ENCODE measurements at regions of chr3 and their contacts with region 1.

Region 1: DNA sequence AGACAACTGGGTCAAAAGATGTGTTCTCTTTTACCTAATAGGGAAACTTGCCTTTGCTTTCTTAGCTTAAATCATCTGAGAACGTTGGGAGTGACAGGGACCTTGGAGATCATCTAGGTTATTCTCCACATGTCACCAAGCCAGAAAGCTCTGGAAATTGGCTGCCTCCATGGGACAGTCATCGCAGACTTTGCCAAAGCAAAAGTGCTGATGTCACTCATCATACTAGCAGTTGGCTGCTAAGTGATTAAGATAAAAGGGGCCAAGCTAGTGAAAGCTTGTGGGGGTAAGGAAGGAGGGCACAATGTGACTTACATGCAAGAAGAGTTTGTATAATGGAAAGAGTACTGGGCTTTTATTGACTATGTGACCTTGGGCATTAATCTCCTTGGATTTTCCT is 198.0 kb upstream of the PFN2 start:
- DNase-seq: peak; percentile 56 to 67
- ATAC-seq: peak; percentile 94 to 97 (median 96)
- H3K4me3 ChIP-seq: no peak overlapping the region
- H3K27ac ChIP-seq: peak overlapping the region; percentile 76
- H3K4me1 ChIP-seq: peaks cover 27% of the 10 kb centered on the region
- H3K27me3 ChIP-seq: no peaks in the 10 kb centered on the region
- CTCF ChIP-seq: no peak

Region 2: GRCh38 chr3:150062492-150062891 is 106.2 kb before region 1 on chr3:
- intact Hi-C with region 1: no loop called
- DNase-seq: no peak
- ATAC-seq: peak; percentile 41 to 66 (median 45)
- H3K4me3 ChIP-seq: peak overlapping the region; percentile 31
- H3K27ac ChIP-seq: peak overlapping the region; percentile 95
- H3K4me1 ChIP-seq: peaks cover 61% of the 10 kb centered on the region
- H3K27me3 ChIP-seq: no peaks in the 10 kb centered on the region
- CTCF ChIP-seq: no peak

Region 3: DNA sequence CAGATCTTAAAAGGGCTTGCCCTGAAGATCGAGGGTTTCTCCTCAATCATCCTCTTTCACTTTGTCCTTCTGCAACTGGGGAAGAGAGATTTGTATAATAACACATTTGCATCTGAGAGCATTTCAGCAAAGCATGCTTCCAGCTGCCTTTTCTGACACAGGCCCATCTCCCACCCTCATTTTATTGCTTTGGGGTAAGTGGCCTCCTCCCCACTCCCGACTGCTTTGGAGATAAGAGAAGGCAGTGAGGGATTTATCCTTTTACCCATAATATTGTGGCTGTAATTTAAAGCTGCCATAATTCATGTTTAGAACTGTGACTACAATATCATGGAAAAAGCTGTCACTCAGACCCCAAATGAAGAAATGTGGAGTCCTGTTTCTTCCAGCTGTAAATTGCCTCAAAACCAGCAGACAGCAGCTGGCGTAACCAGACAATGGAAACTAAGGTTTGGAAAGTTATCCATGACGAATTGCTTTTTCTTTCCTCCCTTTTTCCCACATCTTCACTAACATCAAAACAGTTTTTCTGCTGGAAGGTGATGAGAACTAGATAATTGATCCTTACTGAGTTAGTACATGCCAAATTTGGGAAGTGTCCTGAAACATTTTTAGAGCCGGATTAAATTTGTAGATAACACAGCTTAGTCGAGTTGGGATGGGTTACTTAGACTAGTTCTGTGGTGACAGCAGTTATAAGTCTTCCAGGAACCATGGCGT is 93.8 kb before region 1 on chr3:
- intact Hi-C with region 1: loop called in 1 of 2 experiments (anchors 5 kb)
- DNase-seq: no peak
- ATAC-seq: no peak
- H3K4me3 ChIP-seq: no peak overlapping the region
- H3K27ac ChIP-seq: no peak overlapping the region
- H3K4me1 ChIP-seq: peaks cover 30% of the 10 kb centered on the region
- H3K27me3 ChIP-seq: no peaks in the 10 kb centered on the region
- CTCF ChIP-seq: no peak

Region 4: GRCh38 chr3:150132101-150132749 is 36.5 kb before region 1 on chr3:
- intact Hi-C with region 1: no loop called
- DNase-seq: no peak
- ATAC-seq: peak in 1 of 4 donors; percentile 33
- H3K4me3 ChIP-seq: no peak overlapping the region
- H3K27ac ChIP-seq: no peak overlapping the region
- H3K4me1 ChIP-seq: no peaks in the 10 kb centered on the region
- H3K27me3 ChIP-seq: no peaks in the 10 kb centered on the region
- CTCF ChIP-seq: no peak

Region 5: DNA sequence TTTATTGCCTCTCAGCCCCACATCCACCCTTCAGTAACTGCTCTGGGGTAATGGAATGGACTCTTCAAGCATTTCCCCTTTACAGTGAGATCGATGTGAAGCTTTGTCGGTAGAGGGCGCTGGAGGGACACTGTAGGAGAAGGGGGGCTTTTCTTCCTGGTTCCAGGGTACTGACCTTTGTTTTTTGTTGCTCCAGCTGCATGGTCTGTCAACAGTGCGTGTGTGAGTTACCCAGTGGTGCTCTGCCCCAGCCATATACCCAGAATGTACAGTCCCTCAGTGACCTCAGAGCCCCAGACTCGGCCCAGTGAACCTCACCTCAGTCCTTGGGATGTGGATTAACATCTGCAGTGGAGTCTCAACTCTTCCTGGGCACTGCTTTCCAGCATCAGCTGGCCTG is 59.1 kb after region 1 on chr3:
- intact Hi-C with region 1: no loop called
- DNase-seq: no peak
- ATAC-seq: peak; percentile 60 to 78 (median 71)
- H3K4me3 ChIP-seq: no peak overlapping the region
- H3K27ac ChIP-seq: no peak overlapping the region
- H3K4me1 ChIP-seq: no peaks in the 10 kb centered on the region
- H3K27me3 ChIP-seq: no peaks in the 10 kb centered on the region
- CTCF ChIP-seq: peak; percentile 64